Natural killer cell (primary cell): ENCODE measurements at regions of chr6 and their contacts with region 1.

Region 1: GRCh38 chr6:152982768-152983636 is at the start of gene FBXO5:
- DNase-seq: peak; percentile 98
- ATAC-seq: peak; percentile 91 to 99 (median 92)
- H3K4me3 ChIP-seq: peak within 1 kb of the TSS; percentile 90
- H3K4me3 Mint-ChIP-seq: peak within 1 kb of the TSS; percentile 98
- H3K27ac ChIP-seq: peak within 1 kb of the TSS; percentile 91
- H3K27ac Mint-ChIP-seq: peak within 1 kb of the TSS; percentile 97
- H3K4me1 ChIP-seq: peaks cover 23% of the 10 kb centered on the region
- H3K4me1 Mint-ChIP-seq: peaks cover 25 to 36% of the 10 kb centered on the region in 2 donors
- H3K27me3 ChIP-seq: no peaks in the 10 kb centered on the region
- H3K27me3 Mint-ChIP-seq: no peaks in the 10 kb centered on the region
- CTCF ChIP-seq: no peak
- total RNA-seq, gene FBXO5: 5.9 to 11.2 (median 9.6) TPM

Region 2: GRCh38 chr6:151390276-151391032 is 1592.5 kb before region 1 on chr6:
- intact Hi-C with region 1: loop called (anchors 10 kb)
- DNase-seq: peak; percentile 96 to 99
- ATAC-seq: peak; percentile 74 to 92 (median 75)
- H3K4me3 ChIP-seq: peak overlapping the region; percentile 70
- H3K4me3 Mint-ChIP-seq: peak overlapping the region; percentile 95
- H3K27ac ChIP-seq: peak overlapping the region; percentile 95
- H3K27ac Mint-ChIP-seq: peak overlapping the region; percentile 95 to 99
- H3K4me1 ChIP-seq: peaks cover 36% of the 10 kb centered on the region
- H3K4me1 Mint-ChIP-seq: peaks cover 52% of the 10 kb centered on the region in 2 donors
- H3K27me3 ChIP-seq: no peaks in the 10 kb centered on the region
- H3K27me3 Mint-ChIP-seq: no peaks in the 10 kb centered on the region
- CTCF ChIP-seq: no peak

Region 3: DNA sequence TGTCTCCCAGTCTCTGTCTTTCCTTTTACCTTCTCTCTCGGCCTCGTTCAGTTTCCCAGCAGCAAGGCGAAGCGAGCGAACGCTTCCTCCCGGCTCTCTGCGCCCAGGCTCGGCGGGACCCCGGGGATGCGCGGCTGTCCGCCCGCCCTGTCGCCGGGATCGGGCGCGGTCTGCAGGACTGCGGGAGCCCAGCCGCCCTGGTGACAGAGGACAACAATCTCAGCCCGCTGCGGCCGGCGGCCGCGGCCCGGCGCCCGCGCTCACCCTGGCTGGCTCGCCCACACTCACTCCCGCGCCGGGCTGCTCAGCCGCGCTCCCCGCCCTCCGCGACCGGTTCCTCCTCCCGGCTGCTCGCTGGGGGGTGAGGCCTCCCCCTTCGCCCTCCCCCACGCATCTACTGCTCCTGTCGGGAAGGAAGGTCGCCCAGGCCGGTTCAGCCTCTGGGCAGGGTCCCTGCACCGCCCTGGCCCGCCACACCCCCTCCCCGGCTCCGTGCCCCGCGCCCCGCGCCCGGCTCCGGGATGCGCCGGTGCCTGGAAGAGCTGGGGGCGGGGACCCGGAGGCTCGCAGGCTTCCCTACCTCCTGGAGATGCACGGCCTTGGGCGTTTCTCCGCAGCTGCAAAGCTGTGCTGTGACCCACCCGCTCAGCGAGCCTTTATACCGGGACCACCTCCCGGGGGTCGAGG is 346.2 kb before region 1 on chr6:
- intact Hi-C with region 1: loop called (anchors 2 kb)
- DNase-seq: peak; percentile 35 to 40
- ATAC-seq: peak; percentile 51 to 56 (median 52)
- H3K4me3 ChIP-seq: peak overlapping the region; percentile 71
- H3K4me3 Mint-ChIP-seq: peak overlapping the region; percentile 98
- H3K27ac ChIP-seq: peak overlapping the region; percentile 72
- H3K27ac Mint-ChIP-seq: peak overlapping the region; percentile 89 to 93
- H3K4me1 ChIP-seq: peaks cover 19% of the 10 kb centered on the region
- H3K4me1 Mint-ChIP-seq: peaks cover 64 to 69% of the 10 kb centered on the region in 2 donors
- H3K27me3 ChIP-seq: no peaks in the 10 kb centered on the region
- H3K27me3 Mint-ChIP-seq: no peaks in the 10 kb centered on the region
- CTCF ChIP-seq: no peak

Region 4: DNA sequence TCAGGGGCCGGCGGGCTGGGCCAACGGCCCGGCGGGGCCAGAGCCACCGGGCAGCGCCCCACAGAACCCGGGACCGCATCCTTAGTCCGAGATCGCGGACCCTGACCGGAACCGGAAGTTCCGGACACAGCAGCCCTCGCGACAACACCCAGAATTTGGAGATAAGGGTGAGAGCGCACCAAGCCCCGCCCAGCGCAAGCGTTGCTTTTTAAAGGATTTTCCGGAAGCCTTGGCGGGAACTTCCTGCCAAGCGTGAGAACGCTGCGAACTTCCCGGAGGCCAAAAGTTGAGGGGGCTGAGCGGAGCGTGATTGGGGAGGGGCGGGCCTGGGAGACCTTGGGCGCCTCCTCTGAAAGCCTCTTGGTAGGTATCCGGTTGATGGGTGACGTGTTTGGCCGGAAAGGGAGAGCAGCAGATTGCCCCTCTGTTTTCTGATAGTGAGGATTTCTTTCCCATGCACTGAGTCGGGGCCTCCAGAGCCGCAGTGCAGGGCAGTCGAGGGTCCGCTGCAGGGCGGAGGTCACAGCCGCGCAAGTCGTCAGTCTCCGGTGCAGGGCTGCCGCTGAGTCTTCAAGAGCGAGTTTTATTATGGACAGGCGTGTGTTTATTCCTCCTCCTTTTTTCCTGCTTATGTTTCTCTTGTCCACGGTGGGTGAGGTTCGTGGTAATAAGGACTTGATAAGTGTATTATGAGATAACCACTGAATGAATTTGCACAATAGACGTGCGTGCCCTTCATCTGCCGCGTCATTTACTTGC is 19.8 kb after region 1 on chr6 and contains the start of gene MTRF1L:
- intact Hi-C with region 1: loop called (anchors 2 kb)
- DNase-seq: peak; percentile 74 to 92
- ATAC-seq: peak; percentile 86 to 94 (median 89)
- H3K4me3 ChIP-seq: peak within 1 kb of the TSS; percentile 92
- H3K4me3 Mint-ChIP-seq: peak within 1 kb of the TSS; percentile 98
- H3K27ac ChIP-seq: peak within 1 kb of the TSS; percentile 86
- H3K27ac Mint-ChIP-seq: peak within 1 kb of the TSS; percentile 90 to 97
- H3K4me1 ChIP-seq: peaks cover 18% of the 10 kb centered on the region
- H3K4me1 Mint-ChIP-seq: peaks cover 42 to 43% of the 10 kb centered on the region in 2 donors
- H3K27me3 ChIP-seq: no peaks in the 10 kb centered on the region
- H3K27me3 Mint-ChIP-seq: no peaks in the 10 kb centered on the region
- CTCF ChIP-seq: no peak
- total RNA-seq, gene MTRF1L: 17.6 to 24.7 (median 21.6) TPM

Region 5: GRCh38 chr6:153231048-153231646 is 248.1 kb after region 1 on chr6:
- intact Hi-C with region 1: no loop called
- DNase-seq: peak in 1 of 2 donors; percentile 8
- ATAC-seq: peak in 1 of 3 donors; percentile 69
- H3K4me3 ChIP-seq: no peak overlapping the region
- H3K4me3 Mint-ChIP-seq: no peak overlapping the region
- H3K27ac ChIP-seq: no peak overlapping the region
- H3K27ac Mint-ChIP-seq: no peak overlapping the region
- H3K4me1 ChIP-seq: no peaks in the 10 kb centered on the region
- H3K4me1 Mint-ChIP-seq: peaks cover 0 to 5% of the 10 kb centered on the region in 2 donors
- H3K27me3 ChIP-seq: no peaks in the 10 kb centered on the region
- H3K27me3 Mint-ChIP-seq: peaks cover 0 to 6% of the 10 kb centered on the region in 2 donors
- CTCF ChIP-seq: peak; percentile 59